ENCODE measurements at regions of chr11 and their contacts with region 1.

Region 1: DNA sequence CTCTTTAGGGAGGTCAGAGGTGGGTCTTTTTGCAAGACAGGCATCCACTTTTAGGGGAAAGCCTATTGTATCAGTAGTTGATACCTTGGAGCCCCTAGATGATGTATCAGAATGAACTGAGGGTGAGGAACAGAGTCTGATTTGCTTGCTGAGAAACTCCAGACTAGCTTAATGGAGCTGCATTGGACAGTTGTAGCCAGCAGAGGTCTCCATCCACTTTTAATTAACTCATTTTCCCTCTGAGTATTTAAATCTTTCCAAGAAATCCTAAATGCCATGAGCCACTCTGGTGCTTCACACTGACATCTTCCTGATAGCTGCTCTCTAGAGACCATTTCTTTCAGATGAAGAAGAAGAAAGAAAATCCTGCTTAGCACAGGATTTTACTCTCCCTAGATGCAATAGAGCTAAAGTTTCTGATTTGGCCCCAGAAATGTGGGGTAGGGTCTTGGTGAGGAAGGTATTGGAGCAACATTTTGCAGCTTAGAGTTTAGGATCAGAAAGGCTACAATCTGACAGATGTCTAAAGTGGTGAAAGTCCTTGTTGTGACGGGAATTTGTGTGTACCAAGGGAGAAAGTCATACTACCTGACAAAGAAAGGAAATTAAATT is 38.0 kb downstream of the EXT2 start:
- DNase-seq: peak; percentile 43
- H3K4me3 ChIP-seq: no peak overlapping the region
- H3K27ac ChIP-seq: no peak overlapping the region
- H3K4me1 ChIP-seq: peaks cover 7 to 23% of the 10 kb centered on the region in 2 experiments; a peak in 2 of 4 replicates
- H3K27me3 ChIP-seq: no peaks in the 10 kb centered on the region
- CTCF ChIP-seq: peak; percentile 80
- EP300 ChIP-seq: no peak
- RAD21 ChIP-seq: peak; percentile 82

Region 2: GRCh38 chr11:43880640-43881159 is 252.7 kb before region 1 on chr11 and contains the start of gene ALKBH3:
- CTCF ChIA-PET with region 1: no interaction called
- POLR2A ChIA-PET with region 1: no interaction called
- DNase-seq: peak; percentile 89
- H3K4me3 ChIP-seq: peak within 1 kb of the TSS; percentile 96 to 99
- H3K27ac ChIP-seq: peak within 1 kb of the TSS in 1 of 2 experiments; percentile 28; a peak in 1 of 4 replicates
- H3K4me1 ChIP-seq: peaks cover 11 to 15% of the 10 kb centered on the region in 2 experiments; a peak in 3 of 4 replicates
- H3K27me3 ChIP-seq: peaks cover 12% of the 10 kb centered on the region; the same call in 1 of the 2 replicates
- CTCF ChIP-seq: no peak
- EP300 ChIP-seq: peak in 1 of 2 experiments; percentile 27; a peak in 1 of 4 replicates
- RAD21 ChIP-seq: no peak
- polyA plus RNA-seq, gene ALKBH3: 27.0 and 34.2 TPM in 2 replicates

Region 3: GRCh38 chr11:44095506-44096394 is 37.7 kb before region 1 on chr11 and contains the start of gene EXT2:
- CTCF ChIA-PET with region 1: interaction called, 49 read pairs
- POLR2A ChIA-PET with region 1: no interaction called
- DNase-seq: peak; percentile 97
- H3K4me3 ChIP-seq: peak within 1 kb of the TSS; percentile 71 to 91
- H3K27ac ChIP-seq: peak within 1 kb of the TSS; percentile 24 to 48; a peak in 2 of 4 replicates
- H3K4me1 ChIP-seq: peaks cover 3 to 9% of the 10 kb centered on the region in 2 experiments; a peak in 3 of 4 replicates
- H3K27me3 ChIP-seq: no peaks in the 10 kb centered on the region
- CTCF ChIP-seq: peak; percentile 80
- EP300 ChIP-seq: no peak
- RAD21 ChIP-seq: no peak
- polyA plus RNA-seq, gene EXT2: 92.9 and 96.7 TPM in 2 replicates

Region 4: DNA sequence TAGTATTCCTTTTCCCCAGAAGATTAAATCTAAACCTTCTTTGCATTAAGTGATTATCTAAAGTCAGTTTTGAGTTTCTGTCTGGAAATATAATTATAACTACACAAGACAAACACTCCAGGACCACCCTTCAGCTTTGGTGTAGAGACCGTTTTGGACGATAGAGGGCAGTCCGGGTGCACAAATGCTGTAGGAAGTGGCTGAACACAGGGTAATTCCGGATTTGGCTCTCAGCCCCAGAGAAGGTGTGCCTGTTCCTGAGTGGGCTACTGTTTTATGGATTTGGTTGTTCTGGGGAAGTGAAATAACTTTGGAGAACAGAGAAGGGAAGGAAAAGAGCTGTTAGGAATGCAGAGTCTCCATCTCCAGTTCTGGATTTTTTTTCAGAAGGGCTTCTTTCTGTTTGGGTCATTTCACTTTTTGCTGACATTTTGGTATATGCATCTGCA is 23.2 kb before region 1 on chr11:
- CTCF ChIA-PET with region 1: interaction called, 27 read pairs
- POLR2A ChIA-PET with region 1: no interaction called
- DNase-seq: peak; percentile 65
- H3K4me3 ChIP-seq: no peak overlapping the region
- H3K27ac ChIP-seq: no peak overlapping the region
- H3K4me1 ChIP-seq: peaks cover 14 to 16% of the 10 kb centered on the region in 2 experiments; a peak in 3 of 4 replicates
- H3K27me3 ChIP-seq: no peaks in the 10 kb centered on the region
- CTCF ChIP-seq: peak; percentile 88
- EP300 ChIP-seq: no peak
- RAD21 ChIP-seq: peak; percentile 89

Region 5: DNA sequence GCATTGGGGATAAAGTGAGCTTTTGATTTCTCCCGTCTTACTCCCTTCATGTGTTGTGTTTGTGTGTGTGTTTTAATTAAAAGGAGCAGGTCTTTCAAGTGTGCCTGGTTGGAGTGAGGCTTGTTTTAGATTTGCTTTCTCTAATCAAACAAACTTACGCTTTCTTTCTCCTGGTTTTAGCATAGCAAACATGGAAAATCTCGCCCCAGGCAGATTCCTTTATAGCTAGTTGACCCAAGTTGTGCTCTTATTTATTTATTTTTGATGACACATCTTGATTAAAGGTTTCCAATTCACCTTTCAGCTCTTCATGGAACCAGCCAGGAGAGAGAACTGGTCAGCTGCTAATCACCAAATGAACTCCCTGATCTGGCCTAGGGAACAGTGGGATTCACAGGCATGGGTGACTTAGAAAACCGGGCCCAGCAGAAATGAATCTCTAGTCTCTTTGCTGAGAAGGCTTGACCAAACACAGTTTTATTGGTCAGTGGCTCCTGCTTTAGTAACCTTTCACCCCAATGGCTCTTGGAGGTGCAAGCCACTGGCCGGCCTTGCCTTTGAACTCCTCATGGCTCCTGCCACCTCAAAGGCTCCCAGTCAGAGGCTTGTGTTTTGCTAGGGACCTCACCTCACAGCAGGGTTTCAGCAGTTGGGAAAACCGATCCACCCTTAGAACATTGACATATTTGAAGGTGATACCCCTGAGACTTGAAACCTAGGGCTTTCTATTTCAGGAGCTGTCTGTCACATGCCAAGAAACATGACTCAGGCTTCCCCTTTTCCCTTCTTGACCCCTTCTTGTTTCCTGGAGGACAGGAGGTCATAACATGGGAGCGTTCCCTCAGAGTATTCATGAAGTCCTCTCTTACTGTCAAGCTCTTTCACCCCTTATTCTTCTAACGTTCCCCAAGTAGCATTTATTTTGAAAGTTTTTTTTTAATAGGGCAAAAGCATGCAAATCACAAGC is 10.8 kb after region 1 on chr11:
- CTCF ChIA-PET with region 1: interaction called, 30 read pairs
- POLR2A ChIA-PET with region 1: no interaction called
- DNase-seq: no peak
- H3K4me3 ChIP-seq: no peak overlapping the region
- H3K27ac ChIP-seq: no peak overlapping the region
- H3K4me1 ChIP-seq: peaks cover 8 to 20% of the 10 kb centered on the region in 2 experiments; a peak in 2 of 4 replicates
- H3K27me3 ChIP-seq: no peaks in the 10 kb centered on the region
- CTCF ChIP-seq: no peak
- EP300 ChIP-seq: no peak
- RAD21 ChIP-seq: no peak

Region 6: GRCh38 chr11:44171518-44171917 is 38.1 kb after region 1 on chr11:
- CTCF ChIA-PET with region 1: interaction called, 10 read pairs
- POLR2A ChIA-PET with region 1: no interaction called
- DNase-seq: peak; percentile 78
- H3K4me3 ChIP-seq: no peak overlapping the region
- H3K27ac ChIP-seq: peak overlapping the region in 1 of 2 experiments; percentile 55; a peak in 1 of 4 replicates
- H3K4me1 ChIP-seq: peaks cover 16% of the 10 kb centered on the region in 2 experiments; a peak in 3 of 4 replicates
- H3K27me3 ChIP-seq: no peaks in the 10 kb centered on the region
- CTCF ChIP-seq: no peak
- EP300 ChIP-seq: no peak
- RAD21 ChIP-seq: peak; percentile 17; the same call in 1 of the 2 replicates

Region 7: DNA sequence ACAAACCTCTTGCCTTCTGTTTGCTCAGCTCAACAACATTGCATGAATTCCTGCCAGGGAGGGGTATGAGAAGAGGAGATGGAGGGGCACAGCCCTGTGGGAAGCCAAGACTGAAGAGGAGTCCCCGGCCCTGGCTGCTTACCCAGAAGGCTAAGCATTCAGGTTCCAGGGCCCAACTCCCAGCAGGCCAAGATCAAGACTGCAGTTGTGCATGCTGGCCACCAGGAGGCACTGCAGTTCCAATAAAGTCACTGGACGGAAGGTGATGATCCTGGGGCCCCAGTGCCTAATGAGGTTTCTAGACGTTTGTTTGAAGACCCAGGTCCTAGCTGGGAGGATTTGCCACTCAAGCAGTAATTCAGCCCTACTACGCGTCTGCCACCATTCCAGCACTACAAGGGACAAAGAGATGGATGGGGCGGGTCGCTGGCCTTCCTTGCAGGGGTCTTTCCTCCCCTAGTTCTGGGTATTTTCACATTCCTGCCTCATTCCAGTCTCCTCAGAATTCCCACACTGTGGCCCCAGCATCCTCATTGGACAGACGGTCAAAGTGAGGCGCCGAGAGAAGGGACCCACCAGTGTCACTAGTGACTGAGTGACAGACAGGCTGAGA is 152.9 kb after region 1 on chr11:
- CTCF ChIA-PET with region 1: interaction called, 27 read pairs
- POLR2A ChIA-PET with region 1: no interaction called
- DNase-seq: peak; percentile 86
- H3K4me3 ChIP-seq: no peak overlapping the region
- H3K27ac ChIP-seq: no peak overlapping the region; a peak in 1 of 4 replicates
- H3K4me1 ChIP-seq: peaks cover 0 to 6% of the 10 kb centered on the region in 2 experiments; a peak in 2 of 4 replicates
- H3K27me3 ChIP-seq: no peaks in the 10 kb centered on the region
- CTCF ChIP-seq: peak; percentile 93
- EP300 ChIP-seq: no peak
- RAD21 ChIP-seq: peak; percentile 93

Region 8: GRCh38 chr11:44538375-44539054 is 405.1 kb after region 1 on chr11:
- CTCF ChIA-PET with region 1: interaction called, 42 read pairs
- POLR2A ChIA-PET with region 1: no interaction called
- DNase-seq: peak; percentile 90
- H3K4me3 ChIP-seq: peak overlapping the region in 1 of 2 experiments; percentile 17; a peak in 1 of 4 replicates
- H3K27ac ChIP-seq: no peak overlapping the region
- H3K4me1 ChIP-seq: peaks cover 0 to 2% of the 10 kb centered on the region in 2 experiments; a peak in 1 of 4 replicates
- H3K27me3 ChIP-seq: no peaks in the 10 kb centered on the region
- CTCF ChIP-seq: peak; percentile 93
- EP300 ChIP-seq: no peak
- RAD21 ChIP-seq: peak; percentile 99